ENCODE measurements at regions of chr19 and their contacts with region 1.

Region 1: GRCh38 chr19:1406774-1407499 is 449 bp upstream of the DAZAP1 start:
- DNase-seq: peak; percentile 83 to 98
- H3K4me3 ChIP-seq: peak overlapping the region; percentile 68
- H3K27ac ChIP-seq: peak overlapping the region; percentile 51
- H3K4me1 ChIP-seq: peaks cover 22% of the 10 kb centered on the region
- H3K27me3 ChIP-seq: no peaks in the 10 kb centered on the region
- CTCF ChIP-seq: peak; percentile 60

Region 2: GRCh38 chr19:947265-948036 is 459.5 kb before region 1 on chr19:
- CTCF ChIA-PET with region 1: no interaction called
- POLR2A ChIA-PET with region 1: no interaction called
- intact Hi-C with region 1: no loop called
- DNase-seq: no peak
- H3K4me3 ChIP-seq: no peak overlapping the region
- H3K27ac ChIP-seq: no peak overlapping the region
- H3K4me1 ChIP-seq: peaks cover 13% of the 10 kb centered on the region
- H3K27me3 ChIP-seq: no peaks in the 10 kb centered on the region
- CTCF ChIP-seq: no peak

Region 3: DNA sequence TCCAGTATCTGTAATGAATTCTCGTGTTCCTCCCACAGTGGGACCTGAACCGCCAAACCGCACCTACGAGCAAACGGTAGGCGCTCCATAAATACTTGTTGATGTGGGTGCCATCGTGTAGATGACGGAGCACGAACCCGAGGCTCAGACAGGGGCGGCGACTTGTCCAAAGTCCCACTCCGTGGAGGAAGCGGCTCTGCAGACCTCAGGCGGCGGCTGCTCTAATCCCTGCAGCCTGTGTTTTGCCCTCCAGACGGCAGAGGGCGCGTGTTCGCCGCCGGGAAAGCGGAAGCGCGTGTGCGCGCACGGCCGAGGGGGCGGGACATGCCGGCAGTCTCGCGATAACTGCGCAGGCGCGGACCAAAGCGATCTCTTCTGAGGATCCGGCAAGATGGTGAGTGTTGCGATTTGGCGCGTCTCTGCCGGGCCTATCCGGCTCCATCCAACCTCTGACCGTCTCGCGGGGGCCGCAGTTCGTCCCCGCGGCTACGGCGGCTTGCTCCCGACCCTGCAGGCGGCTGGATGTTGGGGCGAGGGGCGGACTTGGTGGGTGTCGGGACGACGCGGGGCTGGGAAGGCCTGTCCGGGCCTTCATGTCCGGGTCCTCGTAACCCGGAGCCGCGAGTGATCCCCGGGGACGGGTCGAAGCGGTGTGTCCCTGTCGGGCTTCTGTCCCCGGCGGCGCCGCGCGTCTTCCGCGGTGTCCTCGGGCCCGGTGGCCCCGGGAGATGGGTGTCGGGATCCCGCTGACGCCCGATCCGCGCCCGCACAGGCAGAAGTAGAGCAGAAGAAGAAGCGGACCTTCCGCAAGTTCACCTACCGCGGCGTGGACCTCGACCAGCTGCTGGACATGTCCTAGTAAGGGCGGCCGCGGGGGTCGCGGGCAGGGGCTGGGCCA is 31.3 kb after region 1 on chr19 and contains the start of gene RPS15:
- CTCF ChIA-PET with region 1: no interaction called
- POLR2A ChIA-PET with region 1: no interaction called
- intact Hi-C with region 1: loop called (anchors 1 kb)
- DNase-seq: peak; percentile 77 to 85
- H3K4me3 ChIP-seq: peak within 1 kb of the TSS; percentile 76
- H3K27ac ChIP-seq: peak within 1 kb of the TSS; percentile 89
- H3K4me1 ChIP-seq: peaks cover 9% of the 10 kb centered on the region
- H3K27me3 ChIP-seq: no peaks in the 10 kb centered on the region
- CTCF ChIP-seq: peak; percentile 75
- total RNA-seq, gene RPS15: 967 and 1,004 TPM in 2 replicates

Region 4: GRCh38 chr19:1455336-1456120 is 48.6 kb after region 1 on chr19:
- CTCF ChIA-PET with region 1: no interaction called
- POLR2A ChIA-PET with region 1: no interaction called
- intact Hi-C with region 1: loop called (anchors 5 kb)
- DNase-seq: peak; percentile 91 to 93
- H3K4me3 ChIP-seq: peak overlapping the region; percentile 50; the same call in 1 of the 2 replicates
- H3K27ac ChIP-seq: peak overlapping the region; percentile 30; the same call in 1 of the 2 replicates
- H3K4me1 ChIP-seq: no peaks in the 10 kb centered on the region
- H3K27me3 ChIP-seq: no peaks in the 10 kb centered on the region
- CTCF ChIP-seq: no peak

Measured in PC-9 (cell line).